ENCODE measurements at regions of chr9 and their contacts with region 1.

Region 1: GRCh38 chr9:80881940-80882339 is 807.4 kb downstream of the TLE1 start:
- DNase-seq: no peak
- ATAC-seq: no peak
- H3K4me3 ChIP-seq: no peak overlapping the region
- H3K27ac ChIP-seq: no peak overlapping the region
- H3K4me1 ChIP-seq: no peaks in the 10 kb centered on the region
- H3K27me3 ChIP-seq: no peaks in the 10 kb centered on the region
- CTCF ChIP-seq: no peak
- EP300 ChIP-seq: no peak
- POLR2A ChIP-seq: no peak
- RAD21 ChIP-seq: no peak

Region 2: GRCh38 chr9:79287708-79288290 is 1594.1 kb before region 1 on chr9:
- CTCF ChIA-PET with region 1: no interaction called
- POLR2A ChIA-PET with region 1: no interaction called
- RAD21 ChIA-PET with region 1: no interaction called
- SMC1A ChIA-PET with region 1: no interaction called
- in situ Hi-C with region 1: no loop called
- intact Hi-C with region 1: no loop called
- DNase-seq: no peak
- ATAC-seq: no peak
- H3K4me3 ChIP-seq: no peak overlapping the region
- H3K27ac ChIP-seq: no peak overlapping the region
- H3K4me1 ChIP-seq: no peaks in the 10 kb centered on the region
- H3K27me3 ChIP-seq: no peaks in the 10 kb centered on the region
- CTCF ChIP-seq: no peak
- EP300 ChIP-seq: no peak
- POLR2A ChIP-seq: no peak
- RAD21 ChIP-seq: no peak

Region 3: GRCh38 chr9:80792726-80793125 is 89.2 kb before region 1 on chr9:
- CTCF ChIA-PET with region 1: interaction called, 3 read pairs
- POLR2A ChIA-PET with region 1: no interaction called
- RAD21 ChIA-PET with region 1: interaction called, 4 read pairs
- SMC1A ChIA-PET with region 1: interaction called, 22 read pairs
- in situ Hi-C with region 1: no loop called
- intact Hi-C with region 1: no loop called
- DNase-seq: no peak
- ATAC-seq: no peak
- H3K4me3 ChIP-seq: no peak overlapping the region
- H3K27ac ChIP-seq: no peak overlapping the region
- H3K4me1 ChIP-seq: no peaks in the 10 kb centered on the region
- H3K27me3 ChIP-seq: no peaks in the 10 kb centered on the region
- CTCF ChIP-seq: no peak
- EP300 ChIP-seq: no peak
- POLR2A ChIP-seq: no peak
- RAD21 ChIP-seq: no peak

Region 4: GRCh38 chr9:80797831-80798688 is 83.9 kb before region 1 on chr9:
- CTCF ChIA-PET with region 1: interaction called, 3 read pairs
- POLR2A ChIA-PET with region 1: no interaction called
- RAD21 ChIA-PET with region 1: interaction called, 7 read pairs
- SMC1A ChIA-PET with region 1: interaction called, 22 read pairs
- in situ Hi-C with region 1: no loop called
- intact Hi-C with region 1: no loop called
- DNase-seq: no peak
- ATAC-seq: no peak
- H3K4me3 ChIP-seq: no peak overlapping the region
- H3K27ac ChIP-seq: no peak overlapping the region
- H3K4me1 ChIP-seq: no peaks in the 10 kb centered on the region
- H3K27me3 ChIP-seq: no peaks in the 10 kb centered on the region
- CTCF ChIP-seq: no peak
- EP300 ChIP-seq: no peak
- POLR2A ChIP-seq: no peak
- RAD21 ChIP-seq: no peak

Region 5: GRCh38 chr9:80842389-80842788 is 39.6 kb before region 1 on chr9:
- CTCF ChIA-PET with region 1: no interaction called
- POLR2A ChIA-PET with region 1: no interaction called
- RAD21 ChIA-PET with region 1: interaction called, 10 read pairs
- SMC1A ChIA-PET with region 1: interaction called, 28 read pairs
- in situ Hi-C with region 1: no loop called
- intact Hi-C with region 1: no loop called
- DNase-seq: no peak
- ATAC-seq: no peak
- H3K4me3 ChIP-seq: no peak overlapping the region
- H3K27ac ChIP-seq: no peak overlapping the region
- H3K4me1 ChIP-seq: no peaks in the 10 kb centered on the region
- H3K27me3 ChIP-seq: no peaks in the 10 kb centered on the region
- CTCF ChIP-seq: no peak
- EP300 ChIP-seq: no peak
- POLR2A ChIP-seq: no peak
- RAD21 ChIP-seq: no peak

Region 6: DNA sequence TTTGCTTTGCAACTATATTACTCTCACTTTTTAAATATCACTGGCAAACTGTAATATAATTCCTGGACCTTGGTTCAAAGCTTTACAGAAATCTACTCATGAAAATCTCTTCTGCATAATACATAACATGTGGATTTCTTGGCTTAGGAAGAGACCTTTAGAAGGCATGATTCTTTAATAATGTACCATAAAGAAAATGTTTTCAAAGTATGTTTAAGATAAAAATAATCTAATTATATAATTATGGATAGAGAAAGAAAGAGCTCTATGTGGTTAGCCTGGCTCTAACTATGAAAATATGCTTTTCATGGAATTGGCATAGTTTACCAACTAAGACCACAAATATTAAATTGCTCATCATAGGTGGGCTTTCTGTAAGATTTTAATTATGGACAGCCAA is 10.3 kb before region 1 on chr9:
- CTCF ChIA-PET with region 1: interaction called, 5 read pairs
- POLR2A ChIA-PET with region 1: no interaction called
- RAD21 ChIA-PET with region 1: no interaction called
- SMC1A ChIA-PET with region 1: interaction called, 10 read pairs
- in situ Hi-C with region 1: no loop called
- intact Hi-C with region 1: no loop called
- DNase-seq: no peak
- ATAC-seq: no peak
- H3K4me3 ChIP-seq: no peak overlapping the region
- H3K27ac ChIP-seq: no peak overlapping the region
- H3K4me1 ChIP-seq: no peaks in the 10 kb centered on the region
- H3K27me3 ChIP-seq: no peaks in the 10 kb centered on the region
- CTCF ChIP-seq: no peak
- EP300 ChIP-seq: no peak
- POLR2A ChIP-seq: no peak
- RAD21 ChIP-seq: no peak

Region 7: DNA sequence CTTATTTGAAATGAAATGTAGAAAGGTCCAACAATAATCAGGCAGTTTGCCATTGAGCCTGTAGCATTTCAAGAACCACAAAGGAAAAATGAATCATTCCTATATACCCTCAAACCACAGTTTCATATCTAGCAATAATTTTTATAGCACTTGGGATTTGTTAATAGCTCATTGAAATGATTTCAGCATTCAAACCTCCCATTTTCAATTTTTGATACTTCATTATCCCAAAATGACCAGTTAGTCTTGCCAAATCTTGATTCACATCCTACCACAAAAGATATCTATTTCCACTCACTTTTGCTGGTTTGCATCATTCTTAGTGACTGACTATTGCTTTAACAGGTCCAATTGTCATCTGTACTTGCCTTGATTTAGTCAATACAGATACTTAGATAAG is 17.3 kb after region 1 on chr9:
- CTCF ChIA-PET with region 1: no interaction called
- POLR2A ChIA-PET with region 1: no interaction called
- RAD21 ChIA-PET with region 1: no interaction called
- SMC1A ChIA-PET with region 1: no interaction called
- in situ Hi-C with region 1: no loop called
- intact Hi-C with region 1: no loop called
- DNase-seq: no peak
- ATAC-seq: no peak
- H3K4me3 ChIP-seq: no peak overlapping the region
- H3K27ac ChIP-seq: no peak overlapping the region
- H3K4me1 ChIP-seq: no peaks in the 10 kb centered on the region
- H3K27me3 ChIP-seq: no peaks in the 10 kb centered on the region
- CTCF ChIP-seq: no peak
- EP300 ChIP-seq: no peak
- POLR2A ChIP-seq: no peak
- RAD21 ChIP-seq: no peak

Region 8: DNA sequence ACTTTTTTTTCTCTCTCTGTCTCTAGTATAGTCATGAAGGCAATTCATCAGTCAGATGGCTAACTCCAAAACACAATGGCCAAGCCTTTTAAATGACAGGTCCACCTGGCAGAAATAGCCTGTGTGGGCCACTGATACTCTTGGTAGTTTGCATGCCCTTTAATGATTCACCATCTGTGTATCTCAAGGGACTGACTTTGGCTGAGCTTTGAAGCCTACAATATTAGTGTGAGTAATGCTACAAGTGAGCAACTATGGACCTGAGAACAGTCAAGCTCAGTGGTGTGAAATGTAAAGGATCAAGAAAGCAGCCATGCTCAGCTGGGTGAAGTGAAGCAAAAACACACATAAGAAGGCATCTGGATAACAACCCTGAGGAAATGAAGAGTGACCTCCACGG is 300.5 kb after region 1 on chr9:
- CTCF ChIA-PET with region 1: no interaction called
- POLR2A ChIA-PET with region 1: no interaction called
- RAD21 ChIA-PET with region 1: no interaction called
- SMC1A ChIA-PET with region 1: no interaction called
- in situ Hi-C with region 1: no loop called
- intact Hi-C with region 1: no loop called
- DNase-seq: no peak
- ATAC-seq: no peak
- H3K4me3 ChIP-seq: no peak overlapping the region
- H3K27ac ChIP-seq: no peak overlapping the region
- H3K4me1 ChIP-seq: no peaks in the 10 kb centered on the region
- H3K27me3 ChIP-seq: no peaks in the 10 kb centered on the region
- CTCF ChIP-seq: no peak
- EP300 ChIP-seq: no peak
- POLR2A ChIP-seq: no peak
- RAD21 ChIP-seq: no peak